ENCODE measurements at regions of chr6 and their contacts with region 1.

Region 1: DNA sequence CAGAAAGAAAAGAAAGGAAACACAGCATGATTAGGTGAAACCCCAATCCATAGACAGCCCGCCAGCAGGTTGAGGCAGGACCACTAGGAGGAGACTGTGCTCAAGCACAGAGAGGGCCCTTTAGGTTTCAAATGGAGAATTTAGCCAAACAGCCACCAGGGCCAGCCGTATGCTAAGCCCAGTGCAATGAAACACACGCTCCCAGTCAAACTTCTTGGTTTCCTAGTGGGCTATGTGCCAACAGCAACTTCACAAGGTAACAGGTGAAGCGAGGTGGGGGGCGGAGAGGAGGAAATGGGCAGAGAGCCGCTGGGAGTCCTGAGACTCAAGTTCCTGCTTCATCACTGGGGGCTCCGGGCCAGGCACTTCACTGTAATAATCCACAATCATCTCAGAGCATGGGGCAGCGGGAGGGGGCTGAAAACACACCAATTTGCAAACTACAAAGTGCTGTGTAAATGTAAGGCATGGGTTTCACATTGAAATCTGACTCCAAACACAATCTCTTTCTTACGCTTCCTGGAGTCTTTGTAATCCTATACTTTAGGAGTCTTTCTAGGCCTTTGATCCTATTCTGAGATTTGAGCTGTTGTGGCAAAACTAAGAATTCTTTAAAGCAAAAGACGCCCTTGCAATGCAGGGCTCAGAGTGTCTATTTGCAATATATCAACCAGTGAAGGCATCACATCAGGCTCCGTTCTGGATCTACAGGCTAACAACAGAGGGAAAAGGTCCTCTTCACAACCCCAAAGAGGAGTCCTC is 117.3 kb downstream of the OPRM1 start:
- DNase-seq: peak; percentile 20
- CTCF ChIP-seq: peak; percentile 62

Region 2: GRCh38 chr6:154276810-154277628 is 120.7 kb after region 1 on chr6:
- in situ Hi-C with region 1: loop called (anchors 5 kb)
- DNase-seq: peak; percentile 39
- CTCF ChIP-seq: peak; percentile 59

Region 3: GRCh38 chr6:154367839-154368695 is 211.8 kb after region 1 on chr6:
- in situ Hi-C with region 1: loop called (anchors 10 kb)
- DNase-seq: no peak
- CTCF ChIP-seq: no peak

Region 4: GRCh38 chr6:154653853-154654252 is 497.5 kb after region 1 on chr6:
- in situ Hi-C with region 1: loop called (anchors 25 kb)
- DNase-seq: no peak
- CTCF ChIP-seq: no peak

Region 5: DNA sequence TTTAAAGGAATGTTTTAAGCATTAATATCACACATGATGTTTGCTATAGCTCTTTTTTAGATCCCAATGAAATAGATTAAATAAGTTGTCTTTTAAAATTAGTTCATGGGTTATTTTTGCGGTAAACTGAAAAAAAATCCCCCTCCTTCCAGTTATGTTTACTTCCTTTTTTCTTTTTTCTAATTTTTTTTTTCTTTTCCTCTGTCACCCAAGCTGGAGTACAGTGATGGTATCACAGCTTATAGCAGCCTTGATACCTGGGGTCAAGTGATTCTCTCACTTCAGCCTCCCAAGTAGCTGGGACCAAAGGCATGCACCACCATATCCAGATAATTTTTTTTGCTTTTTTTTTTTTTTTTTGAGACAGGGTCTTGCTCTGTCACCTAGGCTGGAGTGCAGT is 559.1 kb after region 1 on chr6:
- in situ Hi-C with region 1: no loop called
- DNase-seq: no peak
- CTCF ChIP-seq: no peak

Measured in GM13977 (cell line).